Ovary (tissue), 10 donors: ENCODE measurements at regions of chr3 and their contacts with region 1.

Region 1: DNA sequence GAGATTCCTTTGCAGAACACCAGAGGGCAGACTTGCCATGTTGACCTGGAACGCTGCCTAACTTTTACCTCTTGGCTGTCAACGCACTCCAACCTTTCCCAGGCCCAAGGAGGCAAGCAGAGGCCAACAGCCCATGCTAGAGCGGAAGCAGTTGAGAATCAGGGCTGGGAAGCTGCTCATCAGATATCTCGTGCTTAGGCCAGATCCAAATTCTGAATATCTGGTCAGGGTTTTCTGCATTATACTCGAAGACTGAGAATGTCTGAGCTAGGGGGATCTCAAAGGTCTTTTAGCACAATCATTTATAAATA is 2.5 kb downstream of the XIRP1 start:
- DNase-seq: peak in 4 of 5 donors; percentile 49 to 65 (median 60)
- H3K4me3 ChIP-seq: no peak overlapping the region
- H3K27ac ChIP-seq: no peak overlapping the region
- H3K4me1 ChIP-seq: no peaks in the 10 kb centered on the region
- H3K27me3 ChIP-seq: no peaks in the 10 kb centered on the region
- CTCF ChIP-seq: peak in 2 of 3 donors; percentile 17 to 58
- EP300 ChIP-seq: no peak
- POLR2A ChIP-seq: no peak

Region 2: GRCh38 chr3:39146984-39147591 is 42.8 kb before region 1 on chr3:
- intact Hi-C with region 1: loop called in 2 of 4 experiments (anchors 5 kb)
- DNase-seq: peak; percentile 80 to 84 (median 80)
- H3K4me3 ChIP-seq: no peak overlapping the region
- H3K27ac ChIP-seq: peak overlapping the region in 1 of 2 donors; percentile 56
- H3K4me1 ChIP-seq: peaks cover 36% of the 10 kb centered on the region
- H3K27me3 ChIP-seq: no peaks in the 10 kb centered on the region
- CTCF ChIP-seq: no peak
- EP300 ChIP-seq: no peak
- POLR2A ChIP-seq: no peak

Region 3: DNA sequence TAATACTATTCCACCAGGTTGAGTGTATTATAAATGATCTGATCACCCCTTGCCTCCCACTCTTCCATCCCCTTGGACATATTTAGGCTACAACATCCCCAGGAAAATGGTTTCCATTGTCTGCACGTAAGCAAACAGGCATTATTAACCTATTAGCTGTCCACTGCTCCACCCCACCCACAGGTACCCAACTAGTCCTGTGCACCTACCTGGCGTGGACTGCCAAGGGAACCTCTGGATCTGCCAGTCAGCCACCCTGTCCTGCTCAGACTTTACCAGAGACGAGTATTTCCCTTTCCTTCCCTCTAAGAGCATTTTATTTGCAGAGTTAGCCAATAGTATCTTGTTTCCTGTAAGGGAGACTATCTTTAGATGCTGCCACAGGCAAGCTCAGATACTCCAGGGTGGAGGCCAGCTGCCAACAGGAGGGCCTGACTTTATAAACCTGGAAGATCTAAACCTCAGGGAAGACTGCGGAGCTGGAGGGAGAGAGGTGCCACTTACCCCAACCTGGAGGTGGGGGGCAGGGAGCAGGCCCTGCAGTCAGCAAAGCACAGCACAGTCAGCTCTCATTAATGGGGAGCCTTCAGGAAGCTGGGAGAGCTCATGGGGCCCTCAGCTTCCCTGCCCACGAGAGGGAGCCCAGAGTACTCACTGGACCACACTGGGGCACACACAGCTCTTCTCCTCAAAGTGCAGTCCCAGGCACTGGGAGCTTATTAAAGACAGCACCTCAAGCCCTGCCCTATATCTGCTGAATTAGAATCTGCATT is 90.0 kb after region 1 on chr3 and contains the start of gene CX3CR1:
- intact Hi-C with region 1: loop called in 2 of 4 experiments (anchors 5 kb)
- DNase-seq: no peak
- H3K4me3 ChIP-seq: no peak within 1 kb of the TSS
- H3K27ac ChIP-seq: no peak within 1 kb of the TSS
- H3K4me1 ChIP-seq: no peaks in the 10 kb centered on the region
- H3K27me3 ChIP-seq: no peaks in the 10 kb centered on the region
- CTCF ChIP-seq: no peak
- EP300 ChIP-seq: no peak
- POLR2A ChIP-seq: no peak
- total RNA-seq, gene CX3CR1: 0.12 to 5.5 (median 1.3) TPM